Activated CD8-positive, alpha-beta T cell treated with anti-CD3 and anti-CD28 coated beads for 36 hours (primary cell): ENCODE measurements at regions of chr17 and their contacts with region 1.

Region 1: GRCh38 chr17:37373530-37374159 is 2.1 kb upstream of the C17orf78 start:
- DNase-seq: peak; percentile 86
- ATAC-seq: peak; percentile 99
- H3K4me3 Mint-ChIP-seq: no peak overlapping the region
- H3K27ac Mint-ChIP-seq: no peak overlapping the region
- H3K4me1 Mint-ChIP-seq: peaks cover 8% of the 10 kb centered on the region
- H3K27me3 Mint-ChIP-seq: no peaks in the 10 kb centered on the region
- CTCF ChIP-seq: peak; percentile 99

Region 2: DNA sequence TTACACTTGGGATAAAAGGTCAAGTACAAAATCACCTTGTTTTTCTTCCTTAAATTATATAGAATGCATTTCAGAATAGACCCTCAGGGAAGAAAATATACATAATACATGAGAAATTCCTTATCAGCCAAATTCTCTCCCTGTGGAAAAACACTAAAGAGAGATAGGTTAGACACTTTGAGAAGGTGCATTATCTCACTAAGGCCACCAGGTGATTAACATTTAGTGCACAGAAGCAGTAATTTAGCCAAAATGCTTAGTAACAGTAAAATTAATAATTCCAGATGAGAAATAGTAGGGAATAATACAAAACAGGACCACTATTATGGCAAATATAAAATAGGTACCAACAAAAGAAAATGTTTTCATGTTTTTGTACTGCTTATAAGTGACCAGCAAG is 183.2 kb before region 1 on chr17:
- CTCF ChIA-PET with region 1: no interaction called
- POLR2A ChIA-PET with region 1: no interaction called
- intact Hi-C with region 1: no loop called
- DNase-seq: no peak
- ATAC-seq: no peak
- H3K4me3 Mint-ChIP-seq: no peak overlapping the region
- H3K27ac Mint-ChIP-seq: no peak overlapping the region
- H3K4me1 Mint-ChIP-seq: peaks cover 3% of the 10 kb centered on the region
- H3K27me3 Mint-ChIP-seq: no peaks in the 10 kb centered on the region
- CTCF ChIP-seq: no peak

Region 3: DNA sequence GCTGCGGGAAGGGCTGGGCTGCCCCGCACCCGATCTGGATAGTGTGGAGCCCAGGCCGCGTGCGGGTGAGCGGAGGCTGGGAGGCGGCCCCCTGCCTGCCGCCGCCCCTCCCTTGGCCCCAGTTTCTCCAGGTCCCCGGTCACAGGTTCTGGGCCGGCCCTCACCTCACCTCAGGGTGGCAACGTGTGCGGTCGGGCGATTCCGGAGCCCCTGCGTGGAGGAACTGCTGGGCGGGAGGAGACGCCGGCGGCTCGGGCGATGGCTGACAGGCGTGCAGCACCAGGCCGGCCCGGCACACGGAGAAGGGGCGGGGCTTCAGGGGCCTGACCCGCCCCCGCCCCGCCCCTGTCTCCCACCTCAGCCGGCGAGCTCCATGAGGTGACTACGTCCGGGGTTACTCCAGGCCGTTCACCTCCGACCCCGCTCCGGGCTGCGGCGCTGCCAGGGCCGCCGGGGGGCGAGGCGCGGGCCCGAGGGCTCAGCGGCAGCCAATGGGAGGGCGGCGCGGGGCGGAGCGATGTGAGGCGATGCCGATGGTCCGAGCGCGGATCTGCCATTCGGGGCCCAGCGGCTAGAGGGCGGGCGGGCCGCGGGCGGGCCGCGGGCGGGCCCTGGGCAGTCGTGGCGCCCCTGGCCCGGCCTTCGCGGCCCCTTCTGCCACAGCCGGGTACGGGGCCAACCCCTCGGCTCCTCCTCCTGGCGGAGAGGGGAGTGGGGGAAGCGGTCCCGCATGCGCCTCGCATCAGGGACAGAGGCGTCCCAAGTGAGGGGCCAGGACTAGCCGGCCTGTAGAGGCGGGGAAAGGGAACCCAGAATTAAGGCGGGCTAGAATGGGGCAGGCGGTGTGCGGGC is 14.6 kb before region 1 on chr17:
- CTCF ChIA-PET with region 1: interaction called, 28 read pairs
- POLR2A ChIA-PET with region 1: interaction called, 3 read pairs
- intact Hi-C with region 1: no loop called
- DNase-seq: peak; percentile 97
- ATAC-seq: peak; percentile 98
- H3K4me3 Mint-ChIP-seq: peak overlapping the region; percentile 96
- H3K27ac Mint-ChIP-seq: peak overlapping the region; percentile 91
- H3K4me1 Mint-ChIP-seq: peaks cover 24% of the 10 kb centered on the region
- H3K27me3 Mint-ChIP-seq: no peaks in the 10 kb centered on the region
- CTCF ChIP-seq: peak; percentile 41

Region 4: GRCh38 chr17:37384560-37385149 is 11.0 kb after region 1 on chr17:
- CTCF ChIA-PET with region 1: interaction called, 55 read pairs
- POLR2A ChIA-PET with region 1: no interaction called
- intact Hi-C with region 1: no loop called
- DNase-seq: no peak
- ATAC-seq: no peak
- H3K4me3 Mint-ChIP-seq: no peak overlapping the region
- H3K27ac Mint-ChIP-seq: no peak overlapping the region
- H3K4me1 Mint-ChIP-seq: no peaks in the 10 kb centered on the region
- H3K27me3 Mint-ChIP-seq: no peaks in the 10 kb centered on the region
- CTCF ChIP-seq: no peak

Region 5: DNA sequence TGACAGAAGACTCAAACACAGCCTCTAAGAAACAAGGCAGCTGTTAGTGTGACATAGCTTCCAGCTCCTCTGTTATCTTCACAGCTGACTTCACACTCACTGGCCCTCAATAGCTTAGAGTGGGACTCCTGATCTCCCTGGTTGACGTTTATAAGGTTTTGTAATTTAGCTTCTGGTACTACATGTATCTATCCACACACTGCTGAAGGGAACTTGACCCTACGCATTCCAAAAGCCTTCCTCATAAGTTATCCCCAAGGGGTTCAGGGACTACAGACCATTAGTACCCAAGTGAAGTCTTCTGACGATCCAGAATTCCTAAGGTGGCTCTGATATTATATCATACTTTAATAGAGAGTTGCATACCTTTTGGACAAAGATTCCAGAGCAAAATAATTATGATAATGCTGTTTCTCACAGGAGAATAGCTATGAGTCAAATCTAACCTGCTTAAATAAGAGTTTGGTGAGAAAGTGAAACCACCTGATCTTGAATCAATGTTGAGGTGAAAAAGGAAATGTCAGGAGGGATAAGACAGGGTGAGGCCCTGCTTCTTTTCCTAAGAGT is 18.5 kb after region 1 on chr17:
- CTCF ChIA-PET with region 1: interaction called, 69 read pairs
- POLR2A ChIA-PET with region 1: no interaction called
- intact Hi-C with region 1: no loop called
- DNase-seq: no peak
- ATAC-seq: peak; percentile 81
- H3K4me3 Mint-ChIP-seq: no peak overlapping the region
- H3K27ac Mint-ChIP-seq: no peak overlapping the region
- H3K4me1 Mint-ChIP-seq: peaks cover 21% of the 10 kb centered on the region
- H3K27me3 Mint-ChIP-seq: no peaks in the 10 kb centered on the region
- CTCF ChIP-seq: no peak

Region 6: DNA sequence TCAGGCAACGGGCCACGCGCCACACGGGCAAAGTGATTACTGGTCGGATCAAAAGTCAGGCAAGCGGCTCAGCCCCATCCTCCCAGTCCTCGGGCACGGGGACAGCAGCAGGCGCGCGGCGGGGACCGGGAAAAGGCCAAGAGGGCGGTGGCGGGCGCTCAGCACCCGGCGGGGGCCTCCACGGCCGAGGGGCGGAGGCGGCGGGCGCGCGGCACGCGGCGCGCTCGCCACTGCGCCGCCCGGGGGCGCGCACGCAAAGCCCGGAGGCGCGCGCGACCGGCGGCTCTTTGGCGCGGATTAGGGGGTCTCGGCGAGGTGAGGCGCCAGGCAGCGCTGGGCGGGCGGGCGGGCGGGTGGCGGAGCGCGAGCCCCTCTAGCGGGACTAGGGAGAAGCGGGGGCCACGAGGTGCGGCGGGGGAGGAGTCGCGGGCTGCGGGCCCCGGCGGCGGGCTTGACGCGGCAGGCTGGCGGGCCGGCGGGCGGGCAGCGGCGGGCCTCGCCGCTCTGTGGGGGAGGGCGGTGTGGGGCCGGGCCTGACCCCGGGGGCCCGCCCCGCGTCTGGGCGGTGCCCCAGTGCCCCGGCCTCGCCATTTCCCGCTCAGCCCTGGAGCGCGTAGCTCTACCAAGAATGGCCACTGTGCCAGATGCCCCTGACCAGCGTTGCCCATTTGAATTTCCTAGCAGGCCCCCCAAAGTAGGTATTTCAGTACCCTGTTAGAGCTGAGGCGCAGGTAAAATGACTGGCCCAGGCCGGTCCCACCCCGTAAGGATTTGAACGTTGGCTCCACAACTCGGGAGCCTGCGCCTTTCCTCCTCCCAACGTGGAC is 33.2 kb after region 1 on chr17 and contains the starts of genes ACACA and TADA2A:
- CTCF ChIA-PET with region 1: interaction called, 19 read pairs
- POLR2A ChIA-PET with region 1: interaction called, 4 read pairs
- intact Hi-C with region 1: no loop called
- DNase-seq: peak; percentile 79
- ATAC-seq: peak; percentile 97
- H3K4me3 Mint-ChIP-seq: peak within 1 kb of the TSS; percentile 99
- H3K27ac Mint-ChIP-seq: peak within 1 kb of the TSS; percentile 97
- H3K4me1 Mint-ChIP-seq: peaks cover 50% of the 10 kb centered on the region
- H3K27me3 Mint-ChIP-seq: no peaks in the 10 kb centered on the region
- CTCF ChIP-seq: no peak
- total RNA-seq, gene ACACA: 66.0 to 68.2 TPM
- total RNA-seq, gene TADA2A: 31.5 to 36.5 TPM

Region 7: GRCh38 chr17:37438141-37438540 is 64.5 kb after region 1 on chr17:
- CTCF ChIA-PET with region 1: interaction called, 16 read pairs
- POLR2A ChIA-PET with region 1: no interaction called
- intact Hi-C with region 1: no loop called
- DNase-seq: no peak
- ATAC-seq: no peak
- H3K4me3 Mint-ChIP-seq: no peak overlapping the region
- H3K27ac Mint-ChIP-seq: no peak overlapping the region
- H3K4me1 Mint-ChIP-seq: no peaks in the 10 kb centered on the region
- H3K27me3 Mint-ChIP-seq: no peaks in the 10 kb centered on the region
- CTCF ChIP-seq: no peak

Region 8: GRCh38 chr17:37458805-37459204 is 85.2 kb after region 1 on chr17:
- CTCF ChIA-PET with region 1: interaction called, 11 read pairs
- POLR2A ChIA-PET with region 1: no interaction called
- intact Hi-C with region 1: no loop called
- DNase-seq: no peak
- ATAC-seq: no peak
- H3K4me3 Mint-ChIP-seq: no peak overlapping the region
- H3K27ac Mint-ChIP-seq: no peak overlapping the region
- H3K4me1 Mint-ChIP-seq: peaks cover 8% of the 10 kb centered on the region
- H3K27me3 Mint-ChIP-seq: no peaks in the 10 kb centered on the region
- CTCF ChIP-seq: no peak

Region 9: DNA sequence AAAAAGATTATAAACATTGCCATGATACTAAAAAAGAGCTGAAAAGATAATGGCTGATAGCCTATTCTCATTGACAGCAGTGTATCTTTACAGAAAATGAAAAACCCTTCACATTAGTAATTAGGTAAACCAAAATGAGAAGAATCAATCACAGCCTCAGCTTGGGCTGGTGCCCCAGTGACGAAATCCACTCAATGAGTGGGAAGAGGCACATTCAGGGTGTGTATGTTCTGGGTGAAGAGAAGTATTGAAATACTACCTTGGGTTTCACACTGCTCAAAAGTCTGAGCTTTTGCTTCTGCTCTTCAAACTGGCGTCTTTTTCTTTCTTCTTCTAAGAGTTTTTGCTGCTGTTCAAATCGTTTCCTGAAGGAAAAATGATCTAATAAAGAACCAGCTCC is 211.4 kb after region 1 on chr17:
- CTCF ChIA-PET with region 1: no interaction called
- POLR2A ChIA-PET with region 1: no interaction called
- intact Hi-C with region 1: no loop called
- DNase-seq: no peak
- ATAC-seq: no peak
- H3K4me3 Mint-ChIP-seq: no peak overlapping the region
- H3K27ac Mint-ChIP-seq: no peak overlapping the region
- H3K4me1 Mint-ChIP-seq: peaks cover 16% of the 10 kb centered on the region
- H3K27me3 Mint-ChIP-seq: no peaks in the 10 kb centered on the region
- CTCF ChIP-seq: no peak